Posterior cingulate gyrus (tissue), 11 donors: ENCODE measurements at regions of chr16 and their contacts with region 1.

Region 1: DNA sequence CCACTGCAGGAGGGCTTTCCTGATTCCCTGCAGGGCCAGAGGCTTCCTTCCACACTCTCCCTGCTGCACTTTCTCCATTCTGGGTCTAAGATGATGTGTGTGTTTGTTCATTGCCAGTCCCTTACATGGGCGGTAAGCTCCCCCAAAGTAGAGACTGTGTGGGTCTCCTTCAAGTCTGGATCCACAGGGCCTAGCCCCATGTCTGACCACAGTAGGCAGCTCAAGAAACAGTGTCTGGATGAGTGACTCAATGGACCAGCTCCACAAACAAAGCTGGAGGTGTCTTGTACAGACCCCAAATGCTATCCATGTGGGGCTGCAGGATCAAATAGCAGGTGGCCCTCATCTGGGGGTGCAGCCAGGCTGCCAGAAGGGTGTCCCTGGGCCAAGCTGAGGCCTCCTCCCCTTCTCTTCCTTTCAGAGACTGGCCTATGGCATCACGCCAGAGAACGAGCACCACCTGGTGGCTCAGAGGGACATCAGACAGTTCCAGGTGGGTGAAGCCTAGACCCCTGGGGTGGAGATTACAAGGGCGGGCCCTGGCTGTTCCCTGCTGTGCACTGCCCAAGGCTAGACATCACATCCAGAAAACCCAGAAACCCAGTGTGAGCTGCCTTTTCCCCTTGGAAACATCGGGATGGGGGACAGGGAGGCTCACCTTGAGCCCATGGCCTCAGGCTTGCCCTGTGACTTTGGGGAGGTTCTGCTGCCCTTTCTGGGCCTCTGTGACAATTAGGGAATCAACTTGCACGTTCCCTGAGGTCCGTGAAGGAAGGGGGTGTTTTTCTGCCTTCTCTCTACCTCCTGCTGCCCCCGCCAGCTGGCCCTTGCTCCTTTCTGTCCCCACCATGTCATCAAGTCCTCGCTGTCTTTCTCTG is 45.9 kb downstream of the SLC6A2 start:
- DNase-seq: peak in 6 of 10 donors; percentile 23 to 91 (median 50)

Region 2: DNA sequence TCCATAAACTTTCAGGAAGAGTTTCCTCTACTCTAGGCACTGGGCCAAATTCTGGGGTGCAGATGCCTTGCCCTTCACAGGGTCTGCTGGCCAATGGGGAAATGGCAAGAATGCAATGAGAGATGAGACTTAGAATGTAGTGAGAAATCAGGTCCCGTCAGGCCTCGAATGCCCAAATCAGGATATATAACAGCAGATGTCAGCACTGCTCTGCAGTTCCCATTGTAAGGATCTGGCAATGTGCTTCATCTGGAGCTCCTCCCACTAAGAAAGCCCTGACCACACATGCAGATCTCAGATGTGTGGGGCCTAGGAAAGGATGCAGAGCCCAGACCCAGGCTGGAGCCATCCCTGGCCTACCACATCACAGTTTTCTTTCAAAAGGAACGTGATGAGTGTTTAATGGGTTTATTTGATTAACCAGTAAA is 206.7 kb before region 1 on chr16:
- intact Hi-C with region 1: loop called (anchors 2 kb)
- DNase-seq: peak in 5 of 10 donors; percentile 26 to 87 (median 48)

Region 3: DNA sequence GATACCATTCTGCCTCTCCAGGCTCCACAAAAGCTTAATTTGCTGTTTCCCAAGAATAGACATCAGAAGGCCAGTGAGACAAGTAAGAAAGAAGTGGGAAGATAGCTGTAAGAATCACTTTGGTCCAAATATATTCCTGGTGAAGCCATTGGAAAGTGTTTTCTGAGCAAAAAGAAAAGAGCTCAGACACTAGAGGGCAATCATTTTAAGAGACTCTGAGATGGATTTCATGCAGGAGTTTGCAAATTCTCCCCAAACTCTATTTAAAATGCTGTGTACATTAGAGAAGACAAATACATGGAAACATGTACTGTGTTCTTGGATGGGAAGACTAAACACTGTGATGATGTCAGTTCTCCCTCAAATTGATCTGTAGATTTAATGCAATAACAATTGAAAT is 53.9 kb before region 1 on chr16:
- intact Hi-C with region 1: loop called (anchors 5 kb)
- DNase-seq: no peak

Region 4: GRCh38 chr16:55773859-55774549 is 72.3 kb after region 1 on chr16:
- intact Hi-C with region 1: no loop called
- DNase-seq: no peak